WTC11 (cell line): ENCODE measurements at regions of chr2 and their contacts with region 1.

Region 1: DNA sequence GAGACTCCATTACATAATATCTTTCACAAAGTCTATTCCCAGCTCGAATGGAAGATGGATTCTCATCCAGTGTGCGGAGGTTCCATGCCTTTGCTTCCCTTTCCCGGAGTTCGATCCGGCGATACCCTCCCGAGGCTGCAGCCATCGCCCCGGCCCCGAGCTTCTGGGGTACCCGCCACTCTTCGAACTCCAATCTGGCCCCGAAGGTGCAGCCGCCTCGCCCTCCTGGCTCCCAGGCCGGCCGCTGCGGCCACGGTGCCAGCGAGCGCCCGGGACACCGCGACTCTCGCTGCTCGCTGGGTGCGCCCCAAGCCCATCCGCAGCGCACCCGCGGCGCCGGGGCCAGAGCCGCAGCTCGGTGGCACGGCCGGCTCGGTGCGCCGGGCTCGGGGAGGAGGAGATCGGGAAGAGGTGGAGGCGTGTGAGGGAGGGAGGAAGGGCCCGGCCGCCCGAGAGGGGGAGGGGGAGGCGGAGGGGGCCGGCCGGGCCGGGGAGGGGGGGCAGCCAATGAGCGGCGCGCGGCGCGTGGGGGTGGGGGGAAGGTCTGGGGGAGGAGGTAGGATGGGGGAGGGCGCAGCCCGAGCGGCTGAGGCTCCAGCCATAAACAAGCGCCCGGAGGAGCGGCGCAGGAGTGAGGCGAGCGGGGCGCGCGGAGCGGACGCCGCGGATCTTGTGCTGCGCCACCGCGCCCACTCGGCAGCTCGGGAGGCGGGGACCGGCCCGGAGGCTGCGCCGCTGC is at the start of gene CRIM1:
- DNase-seq: peak; percentile 82
- ATAC-seq: peak; percentile 58
- H3K4me3 Mint-ChIP-seq: peak within 1 kb of the TSS; percentile 98
- H3K27ac Mint-ChIP-seq: peak within 1 kb of the TSS; percentile 39
- H3K4me1 Mint-ChIP-seq: peaks cover 56% of the 10 kb centered on the region
- H3K27me3 Mint-ChIP-seq: peaks cover 19% of the 10 kb centered on the region
- CTCF ChIP-seq: no peak
- total RNA-seq, gene CRIM1: 24.1 to 25.1 TPM (median 24.3 TPM) in 3 replicates

Region 2: DNA sequence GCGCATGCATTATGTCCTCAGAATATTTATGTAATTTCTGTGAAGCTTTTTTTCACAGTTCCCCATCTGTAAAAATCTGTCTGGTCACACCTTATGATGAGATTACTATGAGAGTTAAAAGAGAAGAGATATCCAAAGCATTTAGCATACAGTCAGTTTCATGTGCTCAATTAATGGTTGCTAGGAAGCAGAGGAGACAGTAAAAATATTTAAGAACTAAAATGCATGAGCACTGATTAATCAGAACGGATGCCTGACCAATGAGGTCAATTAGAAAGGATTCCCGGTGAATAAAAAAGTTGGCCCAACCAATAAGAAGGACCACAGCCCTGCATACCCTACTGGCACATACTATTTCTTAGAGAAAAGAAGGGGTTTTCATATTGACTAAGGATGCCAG is 11.7 kb before region 1 on chr2:
- CTCF ChIA-PET with region 1: no interaction called
- POLR2A ChIA-PET with region 1: no interaction called
- DNase-seq: no peak
- ATAC-seq: no peak
- H3K4me3 Mint-ChIP-seq: no peak overlapping the region
- H3K27ac Mint-ChIP-seq: no peak overlapping the region
- H3K4me1 Mint-ChIP-seq: peaks cover 11% of the 10 kb centered on the region
- H3K27me3 Mint-ChIP-seq: no peaks in the 10 kb centered on the region
- CTCF ChIP-seq: no peak

Region 3: DNA sequence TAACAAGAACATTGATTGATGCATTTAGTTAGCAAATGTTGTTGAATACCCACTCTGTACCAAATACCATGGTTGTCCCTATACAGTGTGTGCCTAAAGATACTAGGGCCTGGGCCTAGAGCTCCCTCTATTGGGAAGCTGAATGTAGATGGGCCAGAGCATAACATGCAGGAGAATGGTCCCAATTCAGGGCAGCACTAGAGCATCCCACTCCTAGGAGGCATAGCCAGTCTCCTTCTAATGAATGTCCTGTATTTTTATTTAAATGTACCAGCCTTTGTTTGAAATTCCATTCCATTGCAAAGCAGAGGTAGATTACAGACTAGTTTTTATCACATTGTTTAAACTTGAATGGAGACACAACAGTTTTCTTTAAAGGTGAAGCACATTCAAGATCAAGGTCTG is 152.1 kb after region 1 on chr2:
- CTCF ChIA-PET with region 1: interaction called, 21 read pairs
- POLR2A ChIA-PET with region 1: interaction called, 3 read pairs
- DNase-seq: peak; percentile 66
- ATAC-seq: peak; percentile 100
- H3K4me3 Mint-ChIP-seq: no peak overlapping the region
- H3K27ac Mint-ChIP-seq: no peak overlapping the region
- H3K4me1 Mint-ChIP-seq: peaks cover 16% of the 10 kb centered on the region
- H3K27me3 Mint-ChIP-seq: no peaks in the 10 kb centered on the region
- CTCF ChIP-seq: peak; percentile 29; the same call in 1 of the 2 replicates

Region 4: GRCh38 chr2:36663851-36664695 is 308.8 kb after region 1 on chr2:
- CTCF ChIA-PET with region 1: interaction called, 15 read pairs
- POLR2A ChIA-PET with region 1: interaction called, 3 read pairs
- DNase-seq: no peak
- ATAC-seq: peak; percentile 88
- H3K4me3 Mint-ChIP-seq: no peak overlapping the region
- H3K27ac Mint-ChIP-seq: no peak overlapping the region
- H3K4me1 Mint-ChIP-seq: peaks cover 13% of the 10 kb centered on the region
- H3K27me3 Mint-ChIP-seq: no peaks in the 10 kb centered on the region
- CTCF ChIP-seq: peak; percentile 65